Sigmoid colon (tissue), 7 donors: ENCODE measurements at regions of chrX and their contacts with region 1.

Region 1: GRCh38 chrX:54808605-54809483 is 1.3 kb downstream of the MAGED2 start:
- DNase-seq: peak; percentile 97
- H3K4me3 ChIP-seq: peak overlapping the region; percentile 55 to 73 (median 70)
- H3K27ac ChIP-seq: peak overlapping the region; percentile 87 to 91 (median 90)
- H3K4me1 ChIP-seq: peaks cover 0 to 15% (median 11%) of the 10 kb centered on the region in 4 donors
- H3K27me3 ChIP-seq: no peaks in the 10 kb centered on the region
- CTCF ChIP-seq: no peak
- EP300 ChIP-seq: peak in 1 of 4 donors; percentile 8
- POLR2A ChIP-seq: no peak

Region 2: DNA sequence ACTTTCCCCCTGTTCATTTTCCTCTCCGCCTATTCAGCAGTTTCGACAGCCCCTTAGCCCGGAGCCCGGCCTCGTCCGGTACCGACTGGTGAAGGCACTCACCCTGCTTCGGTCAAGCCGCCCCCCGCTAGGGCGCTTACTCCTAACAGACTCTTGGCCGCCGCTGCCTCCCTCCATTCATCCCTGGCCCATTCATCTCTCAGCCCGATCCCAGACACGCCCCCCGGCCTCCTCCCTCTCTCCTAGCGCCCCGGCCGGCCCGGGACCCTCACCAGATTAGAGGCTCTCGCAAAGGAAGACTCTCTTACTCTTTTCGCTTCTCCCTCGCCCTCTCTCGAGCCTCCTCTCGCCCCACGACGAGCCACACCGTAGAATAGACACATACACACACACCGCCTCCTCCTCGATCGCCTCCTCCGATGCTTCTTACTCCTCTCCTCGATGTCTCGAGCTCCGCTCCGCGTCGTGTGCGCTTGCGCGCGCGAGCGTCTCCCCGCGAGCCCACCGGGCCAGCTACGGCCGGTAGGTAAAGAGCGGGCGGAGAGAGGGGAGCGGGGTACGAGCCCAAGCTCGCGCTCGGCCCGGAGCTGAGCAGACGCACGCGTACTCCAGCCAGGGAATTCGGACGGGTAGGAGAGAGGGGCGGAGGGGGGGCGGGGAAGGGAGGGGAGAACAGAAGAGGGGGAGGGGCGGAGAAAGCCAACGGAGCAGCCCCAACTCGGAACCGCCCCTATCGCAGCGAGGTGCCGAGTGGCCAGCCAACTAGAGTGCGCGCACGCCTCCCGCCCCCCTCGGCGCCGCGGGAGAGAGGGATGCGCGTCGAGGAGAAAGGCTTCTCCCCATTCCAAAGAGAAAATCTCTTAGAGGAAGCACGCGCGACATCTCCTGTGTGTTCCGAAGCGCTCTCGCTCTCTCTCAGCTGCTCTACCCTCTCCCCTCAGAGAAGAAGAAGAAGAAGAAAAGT is 451.1 kb before region 1 on chrX and contains the start of gene WNK3:
- intact Hi-C with region 1: loop called (anchors 5 kb)
- DNase-seq: peak; percentile 92
- H3K4me3 ChIP-seq: peak within 1 kb of the TSS; percentile 34 to 55 (median 52)
- H3K27ac ChIP-seq: peak within 1 kb of the TSS; percentile 68 to 78 (median 70)
- H3K4me1 ChIP-seq: peaks cover 0 to 4% (median 0%) of the 10 kb centered on the region in 4 donors
- H3K27me3 ChIP-seq: no peaks in the 10 kb centered on the region
- CTCF ChIP-seq: no peak
- EP300 ChIP-seq: no peak
- POLR2A ChIP-seq: no peak
- total RNA-seq, gene WNK3: 1.6 to 1.9 (median 1.7) TPM

Region 3: DNA sequence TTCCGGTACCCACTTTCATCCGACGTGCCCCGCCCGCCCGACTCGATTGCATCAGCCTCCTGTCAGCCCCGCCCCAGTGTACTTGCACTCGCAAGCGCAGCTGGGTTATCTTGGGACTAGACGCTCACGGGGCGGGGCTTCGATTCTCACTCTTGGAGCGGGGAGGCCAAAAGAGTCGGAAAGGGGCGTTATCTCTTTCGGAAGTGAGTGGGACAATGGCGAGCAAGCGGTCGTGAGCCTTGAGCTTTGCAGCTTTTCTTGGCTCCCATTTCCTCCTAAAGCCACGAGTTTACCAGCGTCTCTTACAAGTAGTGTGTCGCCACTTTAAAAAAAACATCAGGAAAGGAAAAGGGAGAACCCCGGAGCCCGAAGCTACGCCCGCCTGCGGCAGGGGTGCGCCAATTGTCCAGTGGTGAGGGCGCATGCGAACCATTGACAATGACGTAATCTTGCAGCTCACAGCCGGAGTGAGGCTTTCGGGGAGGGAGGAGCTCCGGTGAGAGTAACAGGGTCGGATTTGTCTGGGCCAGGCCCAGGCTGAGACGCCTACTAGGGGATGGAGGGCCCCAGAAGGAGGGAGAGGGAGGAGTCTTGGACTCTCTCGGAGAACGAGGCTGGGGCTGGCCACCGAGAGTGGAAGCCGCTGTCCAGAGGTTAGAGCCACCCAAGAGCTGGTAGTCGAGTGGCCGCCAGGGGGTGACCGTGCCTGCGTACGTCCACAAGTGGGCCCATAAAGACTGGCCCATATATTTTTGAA is 169.3 kb before region 1 on chrX:
- intact Hi-C with region 1: loop called (anchors 1 kb)
- DNase-seq: peak; percentile 98
- H3K4me3 ChIP-seq: peak overlapping the region; percentile 34 to 48 (median 47)
- H3K27ac ChIP-seq: peak overlapping the region; percentile 82 to 88 (median 86)
- H3K4me1 ChIP-seq: peaks cover 0 to 6% (median 0%) of the 10 kb centered on the region in 4 donors
- H3K27me3 ChIP-seq: no peaks in the 10 kb centered on the region
- CTCF ChIP-seq: peak; percentile 20 to 55 (median 43)
- EP300 ChIP-seq: peak in 1 of 4 donors; percentile 24
- POLR2A ChIP-seq: peak in 1 of 2 donors; percentile 29

Region 4: DNA sequence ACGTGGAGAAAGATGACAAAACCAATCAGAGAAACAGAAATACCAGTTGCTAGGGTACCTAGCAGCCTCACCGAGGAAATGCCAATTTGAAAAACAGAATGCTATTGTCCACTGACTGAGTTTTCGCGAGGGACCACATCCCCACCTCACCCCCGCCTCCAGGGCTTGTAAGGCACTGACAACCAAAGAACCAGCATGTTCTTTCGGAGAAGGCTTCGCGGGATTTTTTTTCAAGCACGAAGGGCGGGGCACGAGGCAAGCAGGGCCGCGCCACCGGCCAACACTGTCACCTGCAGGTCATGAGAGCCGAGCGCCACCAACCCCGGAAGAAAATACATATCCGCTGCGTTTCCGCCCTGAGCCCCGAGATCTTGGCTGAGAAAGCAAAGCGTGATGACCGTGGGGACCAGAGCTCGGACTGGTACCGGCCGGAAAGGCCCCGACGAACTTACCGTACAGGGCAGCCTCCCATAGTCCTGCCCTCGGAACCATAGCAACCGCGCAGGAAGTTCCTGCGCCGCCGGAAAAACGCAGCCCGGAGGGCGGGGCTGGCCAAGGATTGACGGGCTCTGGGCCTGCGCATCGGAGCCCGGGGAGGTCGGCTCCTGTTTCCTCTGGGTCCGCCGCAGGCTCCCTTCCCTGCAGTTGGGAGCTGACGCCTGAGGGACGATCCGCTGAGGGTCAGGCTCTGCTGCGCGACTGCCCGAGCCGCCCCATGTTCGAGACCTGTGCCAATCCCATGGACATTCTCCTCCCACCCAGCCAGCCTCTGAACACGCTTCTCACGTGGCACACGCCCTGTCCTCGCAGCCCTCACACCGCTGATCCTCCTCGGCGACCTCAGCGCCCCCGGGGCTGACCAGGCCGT is 352.1 kb after region 1 on chrX:
- intact Hi-C with region 1: loop called (anchors 5 kb)
- DNase-seq: peak; percentile 95
- H3K4me3 ChIP-seq: peak overlapping the region; percentile 37 to 58 (median 54)
- H3K27ac ChIP-seq: peak overlapping the region; percentile 86 to 93 (median 88)
- H3K4me1 ChIP-seq: peaks cover 0 to 3% (median 0%) of the 10 kb centered on the region in 4 donors
- H3K27me3 ChIP-seq: no peaks in the 10 kb centered on the region
- CTCF ChIP-seq: no peak
- EP300 ChIP-seq: peak in 1 of 4 donors; percentile 37
- POLR2A ChIP-seq: peak; percentile 72 to 74